ENCODE measurements at regions of chr6 and their contacts with region 1.

Region 1: GRCh38 chr6:43477235-43478007 is at the start of gene TJAP1:
- DNase-seq: peak; percentile 88 to 99 (median 96)
- ATAC-seq: peak; percentile 100
- H3K4me3 ChIP-seq: peak within 1 kb of the TSS; percentile 69 to 78
- H3K4me3 Mint-ChIP-seq: peak within 1 kb of the TSS; percentile 92 to 99 (median 93)
- H3K27ac ChIP-seq: peak within 1 kb of the TSS; percentile 91
- H3K27ac Mint-ChIP-seq: peak within 1 kb of the TSS; percentile 75 to 94
- H3K4me1 ChIP-seq: peaks cover 11 to 18% of the 10 kb centered on the region in 2 experiments
- H3K4me1 Mint-ChIP-seq: peaks cover 45 to 51% (median 47%) of the 10 kb centered on the region in 3 donors
- H3K27me3 ChIP-seq: peaks cover 0 to 4% of the 10 kb centered on the region in 2 experiments
- H3K27me3 Mint-ChIP-seq: no peaks in the 10 kb centered on the region
- total RNA-seq, gene TJAP1: 30.8 to 51.9 (median 50.6) TPM

Region 2: DNA sequence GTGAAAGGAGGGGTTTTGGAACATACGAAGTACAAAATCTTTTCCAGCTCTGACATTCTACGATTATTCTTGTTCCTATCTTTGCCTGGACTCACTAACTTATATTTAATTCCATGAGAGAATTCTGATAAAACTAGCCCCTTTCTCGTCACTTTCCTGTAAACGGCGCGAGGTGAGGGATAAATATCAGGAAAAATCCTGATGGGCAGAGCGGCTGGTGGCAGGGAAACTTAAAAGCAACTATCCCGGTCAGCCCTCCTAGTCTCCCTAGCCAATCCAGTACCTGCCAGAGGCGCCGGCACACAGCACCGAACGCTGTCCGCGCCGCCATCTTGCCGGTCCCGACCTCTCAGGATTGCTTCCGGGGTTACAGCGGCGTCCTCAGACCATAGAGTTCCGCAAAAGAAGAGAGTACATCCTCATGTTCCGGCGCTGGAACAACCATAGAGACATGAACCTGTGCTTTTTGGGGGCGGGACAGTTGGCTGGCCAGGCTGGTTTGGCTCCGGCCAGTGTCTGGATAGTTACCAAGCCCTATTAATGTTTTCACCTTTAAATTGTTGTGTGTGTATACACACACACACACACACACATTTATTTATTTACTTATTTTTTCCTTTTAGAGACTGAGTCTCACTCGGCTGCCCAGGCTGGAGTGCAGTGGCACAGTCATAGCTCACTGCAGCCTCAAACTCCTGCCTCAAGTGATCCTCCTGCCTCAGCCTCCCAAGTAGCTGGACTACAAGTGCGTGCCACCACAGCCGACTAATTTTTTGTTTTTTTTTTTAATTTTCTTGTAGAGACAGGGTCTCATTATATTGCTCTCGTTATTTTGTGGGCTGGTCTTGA is 1259.7 kb before region 1 on chr6 and contains the start of gene MRPS10:
- CTCF ChIA-PET with region 1: no interaction called
- POLR2A ChIA-PET with region 1: interaction called in 1 of 2 experiments, 15 read pairs
- DNase-seq: peak; percentile 72 to 95 (median 89)
- ATAC-seq: peak; percentile 99 to 100 (median 99)
- H3K4me3 ChIP-seq: peak within 1 kb of the TSS; percentile 77 to 85
- H3K4me3 Mint-ChIP-seq: peak within 1 kb of the TSS; percentile 97 to 99 (median 98)
- H3K27ac ChIP-seq: peak within 1 kb of the TSS; percentile 75
- H3K27ac Mint-ChIP-seq: peak within 1 kb of the TSS; percentile 96 to 97
- H3K4me1 ChIP-seq: peaks cover 8 to 28% of the 10 kb centered on the region in 2 experiments
- H3K4me1 Mint-ChIP-seq: peaks cover 15 to 32% (median 25%) of the 10 kb centered on the region in 3 donors
- H3K27me3 ChIP-seq: no peaks in the 10 kb centered on the region
- H3K27me3 Mint-ChIP-seq: no peaks in the 10 kb centered on the region
- total RNA-seq, gene MRPS10: 17.6 to 23.6 (median 20.5) TPM

Region 3: GRCh38 chr6:43559328-43559727 is 81.9 kb after region 1 on chr6:
- CTCF ChIA-PET with region 1: no interaction called
- POLR2A ChIA-PET with region 1: no interaction called
- DNase-seq: no peak
- ATAC-seq: no peak
- H3K4me3 ChIP-seq: no peak overlapping the region
- H3K4me3 Mint-ChIP-seq: no peak overlapping the region
- H3K27ac ChIP-seq: no peak overlapping the region
- H3K27ac Mint-ChIP-seq: no peak overlapping the region
- H3K4me1 ChIP-seq: no peaks in the 10 kb centered on the region
- H3K4me1 Mint-ChIP-seq: no peaks in the 10 kb centered on the region
- H3K27me3 ChIP-seq: no peaks in the 10 kb centered on the region
- H3K27me3 Mint-ChIP-seq: no peaks in the 10 kb centered on the region

Region 4: DNA sequence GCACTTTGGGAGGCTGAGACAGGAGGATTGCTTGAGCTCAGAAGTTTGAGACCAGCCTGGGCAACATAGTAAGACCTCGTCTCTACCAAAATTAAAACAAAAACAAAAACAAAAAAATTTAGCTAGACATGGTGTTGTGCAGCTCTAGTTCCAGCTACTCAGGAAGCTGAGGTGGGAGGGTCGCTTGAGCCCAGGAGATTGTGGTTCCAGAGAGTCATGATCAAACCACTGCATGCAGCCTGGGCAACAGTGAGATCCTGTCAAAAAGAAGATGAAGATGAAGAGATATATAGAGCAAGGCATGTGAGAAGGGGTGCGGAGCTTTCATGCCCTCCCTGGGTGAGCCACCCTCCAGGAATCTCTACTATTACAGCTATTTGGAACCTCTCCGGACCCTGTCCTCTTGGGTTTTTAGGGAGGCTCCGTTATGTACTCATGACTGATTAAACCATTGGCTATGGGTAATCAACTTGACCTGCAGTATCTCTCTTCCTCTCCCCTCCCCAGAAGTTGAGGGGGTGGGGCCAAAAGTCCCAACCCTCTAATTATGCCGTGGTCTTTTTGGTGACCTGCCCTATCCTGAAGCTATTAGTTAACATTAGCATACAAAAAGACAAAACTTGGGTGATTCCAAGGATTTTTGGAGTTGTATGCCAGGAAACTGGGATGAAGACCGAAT is 107.6 kb after region 1 on chr6:
- CTCF ChIA-PET with region 1: no interaction called
- POLR2A ChIA-PET with region 1: no interaction called
- DNase-seq: peak in 11 of 35 experiments; percentile 4 to 20 (median 11)
- ATAC-seq: peak; percentile 61 to 94 (median 86)
- H3K4me3 ChIP-seq: no peak overlapping the region
- H3K4me3 Mint-ChIP-seq: peak overlapping the region in 2 of 3 donors; percentile 11 to 53
- H3K27ac ChIP-seq: peak overlapping the region; percentile 56
- H3K27ac Mint-ChIP-seq: peak overlapping the region; percentile 94
- H3K4me1 ChIP-seq: peaks cover 10 to 19% of the 10 kb centered on the region in 2 experiments
- H3K4me1 Mint-ChIP-seq: peaks cover 24 to 34% (median 27%) of the 10 kb centered on the region in 3 donors
- H3K27me3 ChIP-seq: no peaks in the 10 kb centered on the region
- H3K27me3 Mint-ChIP-seq: no peaks in the 10 kb centered on the region

Measured in T-cell (primary cell).